ENCODE measurements at regions of chr16 and their contacts with region 1.

Region 1: DNA sequence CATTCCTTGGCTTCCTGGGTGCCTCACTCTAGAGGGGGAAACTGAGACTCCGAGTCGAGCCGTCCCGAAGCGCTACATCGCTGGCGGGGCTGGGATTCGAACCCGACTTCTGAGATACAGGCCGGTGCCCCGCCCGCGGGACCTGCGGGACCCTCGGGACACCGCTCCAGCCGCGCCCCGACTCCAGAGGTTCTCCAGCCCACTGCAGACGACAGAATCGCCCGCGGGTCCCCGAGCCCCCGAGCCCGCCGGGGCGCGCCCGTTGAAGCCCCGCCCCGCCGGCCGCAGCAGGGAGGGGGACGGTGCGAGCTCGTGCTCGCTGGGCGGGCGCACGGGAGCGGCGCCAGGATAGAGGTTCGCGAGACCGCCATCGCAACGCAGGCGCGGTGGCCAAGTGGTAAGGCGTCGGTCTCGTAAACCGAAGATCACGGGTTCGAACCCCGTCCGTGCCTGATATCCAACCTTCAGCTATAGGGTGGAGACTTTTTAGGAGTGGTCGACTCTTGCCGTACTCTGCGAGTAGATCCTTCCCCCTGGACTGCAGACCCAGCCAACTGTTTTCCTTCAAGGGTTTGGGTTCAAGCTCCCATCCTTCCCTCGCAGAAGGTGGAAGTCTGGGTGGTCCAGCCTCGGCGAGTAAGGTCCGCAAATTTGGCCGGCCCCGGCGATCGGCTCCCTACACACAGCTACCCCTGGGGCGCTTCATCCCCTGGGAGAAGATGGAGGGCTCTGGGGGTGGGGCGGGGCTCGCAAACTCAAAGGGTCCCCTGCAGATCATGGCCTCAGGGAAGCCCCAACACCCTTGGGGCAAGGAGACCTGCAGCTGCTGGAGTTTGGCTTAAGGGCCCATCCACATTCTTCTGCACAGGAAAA is 214.6 kb downstream of the MRTFB start:
- DNase-seq: peak; percentile 97
- ATAC-seq: peak; percentile 81
- H3K4me3 ChIP-seq: peak overlapping the region; percentile 77 to 98 (median 86)
- H3K4me3 Mint-ChIP-seq: peak overlapping the region; percentile 94
- H3K27ac ChIP-seq: peak overlapping the region; percentile 47 to 62
- H3K27ac Mint-ChIP-seq: peak overlapping the region; percentile 96
- H3K4me1 ChIP-seq: peaks cover 16 to 20% of the 10 kb centered on the region in 2 donors
- H3K4me1 Mint-ChIP-seq: peaks cover 21% of the 10 kb centered on the region
- H3K27me3 ChIP-seq: no peaks in the 10 kb centered on the region
- H3K27me3 Mint-ChIP-seq: no peaks in the 10 kb centered on the region
- CTCF ChIP-seq: no peak

Region 2: GRCh38 chr16:14070877-14071575 is 214.7 kb before region 1 on chr16 and contains the start of gene MRTFB:
- CTCF ChIA-PET with region 1: interaction called, 3 read pairs
- POLR2A ChIA-PET with region 1: no interaction called
- intact Hi-C with region 1: loop called (anchors 2 kb)
- DNase-seq: peak; percentile 92
- ATAC-seq: peak; percentile 87
- H3K4me3 ChIP-seq: peak within 1 kb of the TSS; percentile 6 to 76 (median 67)
- H3K4me3 Mint-ChIP-seq: peak within 1 kb of the TSS; percentile 94
- H3K27ac ChIP-seq: peak within 1 kb of the TSS in 1 of 2 donors; percentile 74
- H3K27ac Mint-ChIP-seq: peak within 1 kb of the TSS; percentile 88
- H3K4me1 ChIP-seq: peaks cover 11 to 12% of the 10 kb centered on the region in 2 donors
- H3K4me1 Mint-ChIP-seq: peaks cover 12% of the 10 kb centered on the region
- H3K27me3 ChIP-seq: peaks cover 0 to 7% (median 0%) of the 10 kb centered on the region in 4 experiments
- H3K27me3 Mint-ChIP-seq: peaks cover 7% of the 10 kb centered on the region
- CTCF ChIP-seq: no peak
- total RNA-seq, gene MRTFB: 29.4 and 39.5 TPM in 2 replicates

Region 3: GRCh38 chr16:14300705-14301168 is 15.0 kb after region 1 on chr16:
- CTCF ChIA-PET with region 1: interaction called, 15 read pairs
- POLR2A ChIA-PET with region 1: interaction called, 8 read pairs
- intact Hi-C with region 1: loop called (anchors 1 kb)
- DNase-seq: peak; percentile 60
- ATAC-seq: peak; percentile 55
- H3K4me3 ChIP-seq: peak overlapping the region in 3 of 5 experiments; percentile 49 to 58 (median 55)
- H3K4me3 Mint-ChIP-seq: peak overlapping the region; percentile 84
- H3K27ac ChIP-seq: no peak overlapping the region
- H3K27ac Mint-ChIP-seq: peak overlapping the region; percentile 17
- H3K4me1 ChIP-seq: peaks cover 23 to 24% of the 10 kb centered on the region in 2 donors
- H3K4me1 Mint-ChIP-seq: peaks cover 19% of the 10 kb centered on the region
- H3K27me3 ChIP-seq: peaks cover 0 to 25% (median 13%) of the 10 kb centered on the region in 4 experiments
- H3K27me3 Mint-ChIP-seq: peaks cover 11% of the 10 kb centered on the region
- CTCF ChIP-seq: no peak

Region 4: DNA sequence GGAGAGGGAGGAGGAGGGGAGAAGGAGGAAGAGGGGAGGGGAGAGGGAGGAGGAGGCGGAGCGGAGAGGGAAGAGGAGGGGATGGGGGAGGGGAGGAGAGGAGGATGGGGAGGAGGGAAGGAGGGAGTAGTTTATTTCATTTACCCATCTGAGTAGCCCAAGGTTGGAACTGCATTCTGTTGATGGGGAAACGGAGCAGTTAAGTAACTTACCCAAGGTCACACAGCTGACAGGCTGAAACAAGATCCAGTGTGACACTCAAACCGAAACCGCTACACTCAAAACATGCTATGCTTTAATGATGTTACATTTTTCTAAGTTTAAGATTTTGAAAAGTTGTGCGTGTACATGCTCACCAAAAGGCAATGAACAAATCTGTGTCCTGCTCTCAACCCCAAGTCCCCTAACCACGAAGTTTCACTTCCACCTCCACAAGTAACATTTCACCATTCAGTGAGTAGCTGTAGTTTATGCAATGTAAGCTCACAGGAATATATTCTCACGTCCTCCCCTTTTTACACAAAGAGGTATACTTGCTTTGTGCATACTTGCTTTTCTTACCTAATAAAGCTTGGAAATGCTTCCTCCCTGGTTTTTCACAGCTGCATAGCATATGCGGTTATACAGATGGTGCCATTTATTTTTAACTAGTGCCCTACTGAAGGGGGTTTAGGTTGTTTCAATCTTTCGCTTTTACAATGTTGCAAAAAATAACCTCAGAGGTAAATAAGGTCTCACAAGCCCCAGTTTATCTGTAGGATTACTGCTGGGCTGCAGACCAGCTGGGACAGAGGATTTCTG is 69.0 kb after region 1 on chr16:
- CTCF ChIA-PET with region 1: no interaction called
- POLR2A ChIA-PET with region 1: interaction called, 6 read pairs
- intact Hi-C with region 1: loop called (anchors 1 kb)
- DNase-seq: peak; percentile 91
- ATAC-seq: peak; percentile 94
- H3K4me3 ChIP-seq: peak overlapping the region in 3 of 5 experiments; percentile 16 to 59 (median 48)
- H3K4me3 Mint-ChIP-seq: peak overlapping the region; percentile 30
- H3K27ac ChIP-seq: peak overlapping the region; percentile 39 to 61
- H3K27ac Mint-ChIP-seq: peak overlapping the region; percentile 43
- H3K4me1 ChIP-seq: peaks cover 8 to 25% of the 10 kb centered on the region in 2 donors
- H3K4me1 Mint-ChIP-seq: peaks cover 29% of the 10 kb centered on the region
- H3K27me3 ChIP-seq: no peaks in the 10 kb centered on the region
- H3K27me3 Mint-ChIP-seq: no peaks in the 10 kb centered on the region
- CTCF ChIP-seq: no peak

Region 5: DNA sequence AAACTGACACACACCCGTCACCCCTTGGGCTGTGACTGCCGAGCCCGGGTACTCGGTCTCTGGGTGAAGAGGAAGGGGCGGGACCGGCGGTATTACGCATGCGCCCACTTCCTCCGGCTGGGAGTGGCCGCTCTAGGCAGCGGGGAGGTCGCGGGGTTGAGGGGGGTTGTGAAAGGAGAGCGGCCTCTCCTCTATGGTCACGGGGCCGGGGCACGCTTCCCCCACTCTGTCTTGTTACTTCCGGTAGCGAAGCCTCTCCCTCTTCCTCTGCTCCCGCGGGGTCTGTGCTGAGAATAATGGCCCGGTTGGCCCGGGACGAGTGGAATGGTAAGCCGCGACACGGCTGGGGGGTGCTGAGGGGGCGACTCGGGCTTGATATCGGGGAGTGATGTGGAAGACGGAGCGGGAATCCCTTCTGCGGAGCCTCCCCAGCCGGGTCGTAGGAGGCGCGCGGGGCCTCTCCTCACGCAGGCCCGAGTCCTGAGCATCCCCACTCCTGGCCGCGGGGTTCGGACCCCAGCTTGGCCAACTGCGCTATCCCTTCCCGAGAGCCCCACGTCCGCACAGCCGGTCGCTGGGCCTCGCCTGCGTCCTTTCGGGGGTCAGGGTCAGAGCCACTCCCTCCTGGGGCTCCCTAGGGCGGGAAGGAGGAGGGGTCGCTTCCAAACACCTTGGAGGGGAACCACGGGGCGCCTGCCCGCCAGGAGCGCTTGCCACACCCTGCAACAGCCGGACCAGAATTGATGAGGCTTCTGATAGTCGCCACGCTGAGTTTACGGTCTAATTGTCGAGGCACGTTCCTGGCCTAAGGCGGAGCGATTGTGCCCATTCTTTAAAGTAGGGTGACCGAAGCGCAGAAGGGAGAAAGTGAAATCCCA is 347.2 kb after region 1 on chr16 and contains the start of gene BFAR:
- CTCF ChIA-PET with region 1: interaction called, 4 read pairs
- POLR2A ChIA-PET with region 1: interaction called, 3 read pairs
- intact Hi-C with region 1: loop called (anchors 1 kb)
- DNase-seq: peak; percentile 99
- ATAC-seq: peak; percentile 77
- H3K4me3 ChIP-seq: peak within 1 kb of the TSS; percentile 65 to 96 (median 92)
- H3K4me3 Mint-ChIP-seq: peak within 1 kb of the TSS; percentile 100
- H3K27ac ChIP-seq: peak within 1 kb of the TSS; percentile 89 to 91
- H3K27ac Mint-ChIP-seq: peak within 1 kb of the TSS; percentile 100
- H3K4me1 ChIP-seq: peaks cover 38 to 45% of the 10 kb centered on the region in 2 donors
- H3K4me1 Mint-ChIP-seq: peaks cover 59% of the 10 kb centered on the region
- H3K27me3 ChIP-seq: no peaks in the 10 kb centered on the region
- H3K27me3 Mint-ChIP-seq: no peaks in the 10 kb centered on the region
- CTCF ChIP-seq: no peak
- total RNA-seq, gene BFAR: 72.9 and 73.5 TPM in 2 replicates